Activated naive CD4-positive, alpha-beta T cell treated with anti-CD3 and anti-CD28 coated beads for 36 hours (primary cell): ENCODE measurements at regions of chr2 and their contacts with region 1.

Region 1: GRCh38 chr2:189412330-189412953 is 28.8 kb upstream of the WDR75 start:
- DNase-seq: peak; percentile 71
- H3K4me3 Mint-ChIP-seq: no peak overlapping the region
- H3K27ac Mint-ChIP-seq: no peak overlapping the region
- H3K4me1 Mint-ChIP-seq: peaks cover 24% of the 10 kb centered on the region
- H3K27me3 Mint-ChIP-seq: no peaks in the 10 kb centered on the region

Region 2: GRCh38 chr2:187581125-187581896 is 1831.1 kb before region 1 on chr2:
- CTCF ChIA-PET with region 1: no interaction called
- intact Hi-C with region 1: loop called (anchors 1 kb)
- DNase-seq: peak; percentile 39
- H3K4me3 Mint-ChIP-seq: no peak overlapping the region
- H3K27ac Mint-ChIP-seq: no peak overlapping the region
- H3K4me1 Mint-ChIP-seq: peaks cover 6% of the 10 kb centered on the region
- H3K27me3 Mint-ChIP-seq: peaks cover 11% of the 10 kb centered on the region

Region 3: DNA sequence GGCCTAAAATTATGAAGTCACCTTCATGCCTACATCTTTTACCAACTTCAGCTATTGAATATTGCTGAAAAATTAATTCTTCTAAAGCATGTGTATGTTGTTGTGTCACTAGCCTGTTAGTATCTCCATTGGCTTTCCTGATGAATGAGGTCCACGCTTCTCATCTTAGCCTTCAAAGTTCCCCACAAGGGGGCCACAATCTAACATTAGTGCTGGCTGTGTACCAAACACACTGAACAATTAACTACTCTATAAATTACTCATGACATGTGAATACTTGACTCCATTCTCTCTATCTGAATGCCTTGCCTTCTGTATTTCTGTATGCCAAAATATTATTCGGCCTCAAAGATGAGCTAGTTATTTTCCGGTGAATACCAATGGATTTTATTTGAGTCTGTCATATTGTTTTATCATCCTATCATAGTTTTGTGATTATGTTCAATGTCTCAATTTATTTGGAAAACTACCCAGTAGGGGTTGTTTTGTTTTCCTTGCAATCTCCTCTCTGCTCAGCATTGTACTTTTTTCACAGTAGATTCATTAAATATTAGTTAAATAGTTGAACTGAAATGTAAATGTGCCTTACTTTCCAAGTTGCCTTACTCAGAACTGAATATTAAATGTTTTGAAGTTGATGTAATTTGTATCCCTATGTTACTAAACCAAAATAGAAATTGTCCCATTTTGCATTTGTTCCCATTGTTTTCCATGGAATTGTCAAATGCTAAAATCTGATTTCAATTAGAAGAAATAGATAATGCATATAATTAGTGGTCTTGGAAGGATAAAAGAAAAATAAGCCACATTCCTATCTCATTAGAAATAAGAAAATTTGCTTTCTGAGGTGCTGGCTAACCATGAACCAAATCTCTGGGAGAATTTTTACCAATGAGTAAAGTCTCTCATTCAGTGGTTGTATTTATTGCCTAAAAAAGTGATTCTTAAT is 646.6 kb before region 1 on chr2:
- CTCF ChIA-PET with region 1: no interaction called
- intact Hi-C with region 1: loop called (anchors 5 kb)
- DNase-seq: peak; percentile 18
- H3K4me3 Mint-ChIP-seq: no peak overlapping the region
- H3K27ac Mint-ChIP-seq: no peak overlapping the region
- H3K4me1 Mint-ChIP-seq: no peaks in the 10 kb centered on the region
- H3K27me3 Mint-ChIP-seq: no peaks in the 10 kb centered on the region

Region 4: DNA sequence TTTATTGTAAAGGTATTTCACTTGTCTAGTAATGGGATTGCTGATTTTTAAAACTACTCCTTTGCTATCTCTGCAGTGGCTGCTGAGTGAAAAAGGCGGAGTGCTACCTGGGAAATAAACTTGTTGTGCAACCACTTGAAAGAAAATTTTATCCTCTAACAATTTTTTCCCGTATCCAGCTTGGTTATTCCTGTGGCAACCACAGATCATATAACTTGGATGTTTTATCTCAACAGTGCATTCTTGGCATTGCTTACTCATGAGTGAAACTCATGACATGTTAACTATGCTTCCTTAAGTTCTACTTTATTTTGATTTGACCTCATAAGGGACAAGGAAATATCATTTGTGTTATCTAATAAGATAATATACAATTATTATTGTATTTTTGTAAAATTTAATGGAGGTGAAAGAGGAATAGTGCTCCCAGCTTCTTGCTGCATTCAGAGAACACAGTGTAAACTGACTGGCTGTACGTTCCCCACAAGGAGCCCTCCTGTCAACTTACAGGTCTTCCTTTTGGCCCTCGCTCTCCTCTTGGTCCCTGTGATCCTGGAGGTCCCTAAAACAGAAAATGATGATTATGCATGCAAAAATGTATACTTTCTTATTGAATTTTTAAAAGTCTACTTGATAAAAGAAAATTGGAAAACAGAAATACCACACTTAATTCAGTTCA is 315.5 kb before region 1 on chr2:
- CTCF ChIA-PET with region 1: interaction called, 33 read pairs
- intact Hi-C with region 1: loop called (anchors 1 kb)
- DNase-seq: no peak
- H3K4me3 Mint-ChIP-seq: no peak overlapping the region
- H3K27ac Mint-ChIP-seq: no peak overlapping the region
- H3K4me1 Mint-ChIP-seq: no peaks in the 10 kb centered on the region
- H3K27me3 Mint-ChIP-seq: no peaks in the 10 kb centered on the region

Region 5: GRCh38 chr2:189142893-189143759 is 269.3 kb before region 1 on chr2:
- CTCF ChIA-PET with region 1: interaction called, 53 read pairs
- intact Hi-C with region 1: loop called (anchors 1 kb)
- DNase-seq: peak; percentile 68
- H3K4me3 Mint-ChIP-seq: no peak overlapping the region
- H3K27ac Mint-ChIP-seq: no peak overlapping the region
- H3K4me1 Mint-ChIP-seq: peaks cover 3% of the 10 kb centered on the region
- H3K27me3 Mint-ChIP-seq: no peaks in the 10 kb centered on the region

Region 6: DNA sequence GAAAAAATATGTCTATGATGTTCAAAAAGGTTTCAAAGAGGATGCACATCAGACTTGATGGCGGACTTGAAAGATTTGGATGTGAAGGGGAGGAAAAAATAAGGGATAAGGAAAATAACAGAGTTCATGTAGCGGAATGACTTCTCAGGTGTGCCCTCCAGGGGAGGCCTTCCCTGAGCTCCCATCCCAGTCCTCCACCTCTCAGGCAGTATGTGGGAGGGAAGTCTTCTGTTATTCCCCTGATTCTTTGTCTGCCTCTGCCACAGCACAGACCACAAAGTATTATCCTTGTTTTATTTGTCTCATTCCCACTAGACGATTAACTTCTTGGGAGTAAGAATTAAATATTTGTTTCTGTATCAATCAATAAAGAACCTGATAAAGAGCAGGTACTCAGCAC is 250.5 kb before region 1 on chr2:
- CTCF ChIA-PET with region 1: no interaction called
- intact Hi-C with region 1: no loop called
- DNase-seq: no peak
- H3K4me3 Mint-ChIP-seq: no peak overlapping the region
- H3K27ac Mint-ChIP-seq: no peak overlapping the region
- H3K4me1 Mint-ChIP-seq: no peaks in the 10 kb centered on the region
- H3K27me3 Mint-ChIP-seq: no peaks in the 10 kb centered on the region

Region 7: DNA sequence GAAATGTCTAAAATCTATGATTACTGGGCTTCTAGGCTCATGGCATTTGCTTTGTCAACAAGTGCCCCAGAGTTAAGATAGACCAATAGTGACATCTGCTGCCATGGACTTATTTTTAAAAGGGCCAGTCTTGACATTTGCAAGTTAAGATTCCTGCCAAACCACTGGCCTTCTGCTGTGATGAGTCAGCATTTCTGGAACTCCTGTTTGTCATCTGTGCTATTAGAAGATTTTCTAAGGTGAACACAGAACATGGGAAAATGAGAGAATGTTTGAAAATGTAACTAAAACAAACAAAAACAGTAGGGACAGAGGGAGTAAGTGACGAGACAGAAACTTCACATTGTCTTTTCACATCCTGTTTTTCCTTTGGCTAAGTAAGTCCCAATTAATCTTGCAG is 64.9 kb before region 1 on chr2:
- CTCF ChIA-PET with region 1: interaction called, 8 read pairs
- intact Hi-C with region 1: loop called (anchors 1 kb)
- DNase-seq: peak; percentile 28
- H3K4me3 Mint-ChIP-seq: no peak overlapping the region
- H3K27ac Mint-ChIP-seq: no peak overlapping the region
- H3K4me1 Mint-ChIP-seq: peaks cover 17% of the 10 kb centered on the region
- H3K27me3 Mint-ChIP-seq: no peaks in the 10 kb centered on the region

Region 8: GRCh38 chr2:189613077-189613636 is 200.7 kb after region 1 on chr2:
- CTCF ChIA-PET with region 1: no interaction called
- intact Hi-C with region 1: no loop called
- DNase-seq: no peak
- H3K4me3 Mint-ChIP-seq: no peak overlapping the region
- H3K27ac Mint-ChIP-seq: no peak overlapping the region
- H3K4me1 Mint-ChIP-seq: peaks cover 2% of the 10 kb centered on the region
- H3K27me3 Mint-ChIP-seq: no peaks in the 10 kb centered on the region